ENCODE measurements at regions of chr19 and their contacts with region 1.

Region 1: DNA sequence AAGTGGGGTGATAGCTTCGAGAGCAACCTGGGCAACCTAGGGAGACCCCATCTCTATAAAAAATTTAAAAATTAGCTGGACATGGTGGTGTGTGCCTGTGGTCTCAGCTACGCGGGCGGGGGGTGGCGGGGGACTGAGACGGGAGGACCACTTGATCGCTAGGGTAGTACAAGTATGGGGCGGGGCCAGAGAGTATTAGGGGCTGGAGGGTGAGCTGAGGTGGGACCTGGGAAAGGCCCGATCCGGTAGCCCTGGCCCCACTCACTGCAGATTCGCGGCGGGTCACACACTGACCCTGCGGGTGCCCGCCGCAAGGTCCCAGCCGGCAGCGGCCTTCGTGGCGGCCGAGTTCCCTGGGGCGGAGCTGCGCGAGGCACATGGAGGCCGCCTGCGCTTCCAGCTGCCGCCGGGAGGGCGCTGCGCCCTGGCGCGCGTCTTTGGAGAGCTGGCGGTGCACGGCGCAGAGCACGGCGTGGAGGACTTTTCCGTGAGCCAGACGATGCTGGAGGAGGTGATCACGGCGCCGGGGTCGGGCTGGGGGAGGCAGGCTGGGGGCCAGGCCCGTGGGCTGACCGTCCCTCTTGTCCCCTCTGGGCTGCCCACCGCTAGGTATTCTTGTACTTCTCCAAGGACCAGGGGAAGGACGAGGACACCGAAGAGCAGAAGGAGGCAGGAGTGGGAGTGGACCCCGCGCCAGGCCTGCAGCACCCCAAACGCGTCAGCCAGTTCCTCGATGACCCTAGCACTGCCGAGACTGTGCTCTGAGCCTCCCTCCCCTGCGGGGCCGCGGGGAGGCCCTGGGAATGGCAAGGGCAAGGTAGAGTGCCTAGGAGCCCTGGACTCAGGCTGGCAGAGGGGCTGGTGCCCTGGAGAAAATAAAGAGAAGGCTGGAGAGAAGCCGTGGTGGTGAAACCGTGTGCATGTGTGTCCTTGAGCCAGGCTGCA is 2.0 kb upstream of the ARHGAP45 start:
- H3K4me3 Mint-ChIP-seq: no peak overlapping the region
- H3K27ac Mint-ChIP-seq: peak overlapping the region; percentile 41
- H3K4me1 Mint-ChIP-seq: peaks cover 47% of the 10 kb centered on the region
- H3K27me3 Mint-ChIP-seq: peaks cover 4% of the 10 kb centered on the region

Region 2: GRCh38 chr19:1020868-1021425 is 44.0 kb before region 1 on chr19 and contains the start of gene TMEM259:
- intact Hi-C with region 1: loop called (anchors 5 kb)
- H3K4me3 Mint-ChIP-seq: peak within 1 kb of the TSS; percentile 97
- H3K27ac Mint-ChIP-seq: peak within 1 kb of the TSS; percentile 96
- H3K4me1 Mint-ChIP-seq: peaks cover 59% of the 10 kb centered on the region
- H3K27me3 Mint-ChIP-seq: no peaks in the 10 kb centered on the region

Region 3: GRCh38 chr19:1039646-1040475 is 25.1 kb before region 1 on chr19 and contains the start of gene ABCA7:
- intact Hi-C with region 1: loop called (anchors 2 kb)
- H3K4me3 Mint-ChIP-seq: peak within 1 kb of the TSS; percentile 99
- H3K27ac Mint-ChIP-seq: peak within 1 kb of the TSS; percentile 88
- H3K4me1 Mint-ChIP-seq: peaks cover 65% of the 10 kb centered on the region
- H3K27me3 Mint-ChIP-seq: no peaks in the 10 kb centered on the region

Region 4: GRCh38 chr19:1103708-1104310 is 38.9 kb after region 1 on chr19 and contains the start of gene GPX4:
- intact Hi-C with region 1: loop called (anchors 5 kb)
- H3K4me3 Mint-ChIP-seq: peak within 1 kb of the TSS; percentile 80
- H3K27ac Mint-ChIP-seq: peak within 1 kb of the TSS; percentile 93
- H3K4me1 Mint-ChIP-seq: peaks cover 60% of the 10 kb centered on the region
- H3K27me3 Mint-ChIP-seq: no peaks in the 10 kb centered on the region

Measured in dendritic cell treated with granulocyte-macrophage colony-stimulating factor and Interleukin-4, amounts not matched to agents 40 ng/mL and 50 ng/mL, for 4 days (primary cell).